ENCODE measurements at regions of chr10 and their contacts with region 1.

Region 1: DNA sequence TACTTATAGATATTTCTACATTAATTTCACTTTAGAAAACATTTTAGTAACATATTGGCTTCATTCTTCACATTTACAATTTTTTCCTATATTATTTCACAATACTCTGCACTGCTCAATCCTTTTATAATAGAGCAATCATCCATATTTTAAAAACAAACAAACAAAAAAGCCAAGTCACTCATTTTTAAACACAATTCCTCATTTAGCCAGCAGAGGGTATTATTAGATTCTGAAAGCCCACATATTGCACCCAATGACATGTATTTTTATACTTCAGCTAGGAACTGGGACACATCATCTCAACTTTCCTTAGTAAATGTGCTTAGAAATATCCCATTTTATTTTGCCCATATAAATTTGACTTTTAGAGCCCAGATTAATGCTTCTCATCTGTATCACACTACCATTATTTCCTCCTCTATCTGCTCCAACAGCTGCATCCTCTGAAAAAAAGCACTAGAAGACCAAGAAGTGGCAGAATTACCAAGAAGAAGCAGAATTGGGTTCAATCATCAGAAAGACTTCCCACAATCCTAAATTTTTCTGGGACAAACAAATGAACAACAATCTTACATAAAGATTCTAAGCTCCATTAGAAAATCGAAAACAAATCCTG is 29.5 kb downstream of the CTNNA3 start:
- DNase-seq: no peak
- ATAC-seq: peak; percentile 63
- H3K4me3 ChIP-seq: no peak overlapping the region
- H3K27ac ChIP-seq: no peak overlapping the region
- H3K4me1 ChIP-seq: no peaks in the 10 kb centered on the region
- H3K27me3 ChIP-seq: no peaks in the 10 kb centered on the region
- CTCF ChIP-seq: peak; percentile 12 to 53 (median 25); a peak in 3 of 6 replicates
- EP300 ChIP-seq: no peak
- POLR2A ChIP-seq: no peak
- RAD21 ChIP-seq: peak; percentile 59

Region 2: DNA sequence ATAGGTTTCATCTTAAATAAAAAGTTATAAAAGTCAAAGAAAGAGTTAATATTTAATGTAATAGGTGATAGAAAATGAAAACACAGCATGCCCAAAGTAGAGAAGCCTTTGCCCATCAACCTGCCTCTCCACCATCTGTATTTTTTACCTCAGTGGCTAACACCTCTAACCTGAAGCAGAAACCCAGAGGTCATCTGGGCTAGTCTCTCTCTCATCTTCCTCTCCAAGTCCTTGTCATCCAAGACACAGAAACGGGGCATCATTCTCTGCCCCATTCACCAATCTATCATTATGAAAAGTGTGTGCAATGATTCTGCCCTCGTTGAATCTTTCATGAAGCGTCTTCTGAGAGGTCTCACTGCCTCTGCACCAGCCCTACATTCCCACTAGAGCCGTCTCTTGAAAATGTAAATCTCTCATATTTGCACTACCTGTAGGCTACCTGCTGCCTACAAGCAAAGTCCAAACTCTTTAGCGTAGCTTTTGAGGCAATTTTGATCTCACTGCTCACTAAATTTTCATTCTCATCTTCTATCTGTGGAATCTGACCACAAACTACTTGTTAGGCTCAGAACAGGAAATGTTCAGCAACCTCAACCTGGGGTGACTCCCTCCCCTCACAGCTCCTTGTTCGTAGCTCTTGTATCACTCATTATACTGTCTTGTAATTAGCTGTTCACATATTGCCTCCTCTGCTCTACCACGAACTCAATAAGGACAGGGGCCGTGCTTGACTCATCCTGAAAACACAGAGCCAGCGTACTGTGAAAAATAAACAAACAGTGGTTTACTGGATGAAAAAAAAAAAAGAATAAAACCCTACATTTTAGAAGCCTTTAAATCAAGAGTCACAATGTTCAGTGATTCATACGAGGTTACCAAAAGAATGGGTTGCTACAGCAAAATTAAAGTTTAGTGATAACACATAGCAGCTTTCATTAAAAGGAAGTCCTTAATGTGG is 53.7 kb before region 1 on chr10:
- CTCF ChIA-PET with region 1: interaction called, 8 read pairs
- POLR2A ChIA-PET with region 1: interaction called, 3 read pairs
- RAD21 ChIA-PET with region 1: interaction called, 11 read pairs
- SMC1A ChIA-PET with region 1: interaction called, 17 read pairs
- in situ Hi-C with region 1: no loop called
- intact Hi-C with region 1: no loop called
- DNase-seq: peak; percentile 59
- ATAC-seq: peak; percentile 99
- H3K4me3 ChIP-seq: no peak overlapping the region
- H3K27ac ChIP-seq: no peak overlapping the region
- H3K4me1 ChIP-seq: no peaks in the 10 kb centered on the region
- H3K27me3 ChIP-seq: no peaks in the 10 kb centered on the region
- CTCF ChIP-seq: no peak
- EP300 ChIP-seq: 0 out of 4 replicates have a peak, but pooled peaks of 1 of the 2 experiments have one; percentile 35
- POLR2A ChIP-seq: no peak
- RAD21 ChIP-seq: no peak

Region 3: DNA sequence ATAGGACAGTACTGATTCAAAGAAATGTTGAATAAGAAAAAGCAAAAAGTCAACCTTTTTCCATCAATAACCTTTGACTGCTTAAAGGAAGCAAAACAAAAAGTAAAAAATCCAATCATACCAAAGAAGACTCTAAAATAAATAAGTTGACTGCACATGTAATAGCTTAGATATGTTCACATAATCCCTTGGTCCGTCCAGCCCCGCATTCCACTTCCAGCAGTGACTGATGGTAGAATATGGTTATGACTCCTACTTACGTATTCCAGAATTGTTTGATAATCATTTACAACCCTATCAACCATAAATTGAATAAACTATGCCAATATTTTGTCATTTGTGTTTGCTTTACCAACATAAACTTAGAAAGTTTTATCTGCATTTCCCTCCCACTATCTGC is 48.4 kb before region 1 on chr10:
- CTCF ChIA-PET with region 1: interaction called, 8 read pairs
- POLR2A ChIA-PET with region 1: no interaction called
- RAD21 ChIA-PET with region 1: interaction called, 11 read pairs
- SMC1A ChIA-PET with region 1: interaction called, 18 read pairs
- in situ Hi-C with region 1: no loop called
- intact Hi-C with region 1: no loop called
- DNase-seq: no peak
- ATAC-seq: no peak
- H3K4me3 ChIP-seq: no peak overlapping the region
- H3K27ac ChIP-seq: no peak overlapping the region
- H3K4me1 ChIP-seq: no peaks in the 10 kb centered on the region; the same call in 1 of the 2 replicates
- H3K27me3 ChIP-seq: no peaks in the 10 kb centered on the region
- CTCF ChIP-seq: no peak
- EP300 ChIP-seq: no peak
- POLR2A ChIP-seq: no peak
- RAD21 ChIP-seq: no peak

Region 4: GRCh38 chr10:67764012-67764822 is 97.7 kb after region 1 on chr10:
- CTCF ChIA-PET with region 1: interaction called, 9 read pairs
- POLR2A ChIA-PET with region 1: no interaction called
- RAD21 ChIA-PET with region 1: interaction called, 14 read pairs
- SMC1A ChIA-PET with region 1: interaction called, 47 read pairs
- in situ Hi-C with region 1: no loop called
- intact Hi-C with region 1: no loop called
- DNase-seq: peak; percentile 94
- ATAC-seq: peak; percentile 88
- H3K4me3 ChIP-seq: peak overlapping the region; percentile 86
- H3K27ac ChIP-seq: peak overlapping the region; percentile 94
- H3K4me1 ChIP-seq: no peaks in the 10 kb centered on the region
- H3K27me3 ChIP-seq: no peaks in the 10 kb centered on the region
- CTCF ChIP-seq: no peak
- EP300 ChIP-seq: peak; percentile 3 to 89; a peak in 1 of 4 replicates
- POLR2A ChIP-seq: peak; percentile 64
- RAD21 ChIP-seq: no peak

Region 5: DNA sequence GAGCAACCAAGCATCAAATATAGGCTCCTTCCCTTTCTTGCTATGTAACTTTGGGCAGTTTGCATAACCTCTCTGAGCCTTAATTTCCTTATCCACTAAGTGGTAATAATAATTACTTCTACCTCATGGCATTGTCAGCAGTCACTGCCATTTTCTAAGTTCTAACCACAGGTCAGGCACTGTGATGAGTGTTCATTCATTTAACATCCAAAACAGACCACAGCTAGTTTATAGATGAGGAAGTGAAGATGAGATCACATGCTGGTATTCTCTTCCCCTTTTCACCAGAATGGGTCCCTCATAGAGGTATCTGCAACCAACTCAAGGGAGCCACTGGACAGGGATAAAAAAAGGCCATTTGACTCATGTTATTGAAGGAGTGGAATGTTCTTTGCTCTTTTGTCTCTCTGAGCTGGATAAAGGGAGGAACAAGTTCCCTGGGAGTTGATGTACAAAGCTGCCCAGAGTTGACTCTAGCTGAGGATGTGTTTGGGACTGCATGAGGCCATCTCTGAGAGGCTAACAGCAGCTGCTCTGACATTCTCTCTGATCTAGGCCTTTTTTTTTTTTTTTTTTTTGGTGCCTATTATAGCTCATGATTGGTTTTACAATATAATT is 106.5 kb after region 1 on chr10:
- CTCF ChIA-PET with region 1: interaction called, 311 read pairs
- POLR2A ChIA-PET with region 1: interaction called, 3 read pairs
- RAD21 ChIA-PET with region 1: interaction called, 193 read pairs
- SMC1A ChIA-PET with region 1: interaction called, 221 read pairs
- in situ Hi-C with region 1: no loop called
- intact Hi-C with region 1: no loop called
- DNase-seq: peak; percentile 90
- ATAC-seq: peak; percentile 93
- H3K4me3 ChIP-seq: no peak overlapping the region
- H3K27ac ChIP-seq: peak overlapping the region; percentile 82
- H3K4me1 ChIP-seq: peaks cover 42% of the 10 kb centered on the region
- H3K27me3 ChIP-seq: no peaks in the 10 kb centered on the region
- CTCF ChIP-seq: no peak
- EP300 ChIP-seq: peak; percentile 87 to 96
- POLR2A ChIP-seq: no peak
- RAD21 ChIP-seq: no peak

Region 6: GRCh38 chr10:67988606-67989005 is 322.1 kb after region 1 on chr10:
- CTCF ChIA-PET with region 1: no interaction called
- POLR2A ChIA-PET with region 1: no interaction called
- RAD21 ChIA-PET with region 1: no interaction called
- SMC1A ChIA-PET with region 1: no interaction called
- in situ Hi-C with region 1: no loop called
- intact Hi-C with region 1: no loop called
- DNase-seq: no peak
- ATAC-seq: no peak
- H3K4me3 ChIP-seq: no peak overlapping the region
- H3K27ac ChIP-seq: no peak overlapping the region
- H3K4me1 ChIP-seq: no peaks in the 10 kb centered on the region
- H3K27me3 ChIP-seq: no peaks in the 10 kb centered on the region
- CTCF ChIP-seq: no peak
- EP300 ChIP-seq: no peak
- POLR2A ChIP-seq: no peak
- RAD21 ChIP-seq: no peak